ENCODE measurements at regions of chr12 and their contacts with region 1.

Region 1: DNA sequence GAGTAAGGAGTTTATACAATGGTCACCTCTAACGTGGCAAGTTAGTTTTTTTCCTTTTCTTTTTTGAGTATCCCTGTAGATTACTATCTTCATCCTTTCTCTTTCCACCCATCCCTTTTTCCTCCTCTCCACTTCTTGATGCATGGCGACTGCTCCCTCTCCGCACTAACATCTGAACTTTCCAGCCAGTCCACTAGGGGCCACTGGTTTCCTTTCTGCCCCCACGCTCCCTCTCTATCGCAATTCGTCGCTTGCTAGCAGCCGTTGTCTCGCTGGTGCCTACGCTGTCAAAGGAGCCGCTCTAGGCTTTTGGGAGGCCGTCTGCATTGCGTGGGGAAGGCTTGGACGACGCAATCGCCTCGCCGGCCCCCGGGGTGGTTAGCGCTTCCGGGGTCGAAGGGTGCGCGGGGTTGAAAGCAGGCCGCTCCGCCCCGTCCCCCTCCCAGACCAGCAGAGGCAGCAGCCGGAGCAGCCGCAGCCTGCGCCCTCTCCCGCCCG is at the start of gene PCBP2:
- DNase-seq: peak; percentile 97 to 99
- H3K4me3 ChIP-seq: peak within 1 kb of the TSS; percentile 70 to 87
- H3K27ac ChIP-seq: peak within 1 kb of the TSS; percentile 89 to 90
- H3K4me1 ChIP-seq: peaks cover 0 to 23% (median 18%) of the 10 kb centered on the region in 4 donors
- H3K27me3 ChIP-seq: no peaks in the 10 kb centered on the region
- CTCF ChIP-seq: peak; percentile 87 to 93

Region 2: DNA sequence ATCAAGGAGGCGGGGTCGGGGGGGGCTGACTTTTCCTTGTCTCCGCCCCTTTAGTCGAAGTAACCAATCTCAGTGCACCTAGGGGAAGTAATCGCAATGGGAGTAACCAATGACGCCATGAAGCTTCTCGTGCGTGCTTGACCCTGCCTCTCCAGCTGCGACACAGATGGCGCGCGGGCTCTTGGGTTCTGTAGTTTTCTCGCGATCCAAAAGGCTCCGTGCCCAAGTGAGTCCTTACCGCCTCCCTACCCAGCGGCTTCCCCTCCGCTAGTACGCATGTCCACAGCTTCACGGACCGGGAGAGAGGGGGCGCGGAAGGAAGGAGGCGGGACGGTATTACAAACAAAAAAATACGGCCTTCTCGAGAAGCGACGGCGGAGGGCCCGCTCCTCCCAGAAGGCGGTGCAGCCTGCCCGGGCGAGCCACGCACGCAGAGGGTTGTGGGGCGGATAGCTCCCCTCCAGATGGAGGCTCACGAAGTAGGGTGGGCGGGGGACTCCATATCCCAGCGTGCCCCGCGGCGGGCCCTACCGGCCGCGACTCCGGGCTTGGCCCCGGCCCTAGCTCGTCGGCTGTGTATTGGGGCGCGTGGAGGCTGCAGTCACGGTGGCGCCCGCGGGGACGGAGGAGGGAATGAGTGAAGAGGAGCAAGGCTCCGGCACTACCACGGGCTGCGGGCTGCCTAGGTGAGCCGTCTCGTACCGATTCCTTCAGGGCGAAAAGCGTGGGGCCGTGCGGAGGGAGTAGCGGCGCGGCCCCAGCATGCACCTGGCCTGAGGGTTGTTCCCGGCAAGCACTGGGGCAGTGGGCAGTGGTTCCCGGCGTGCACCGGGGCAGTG is 49.3 kb after region 1 on chr12 and contains the start of gene TARBP2:
- intact Hi-C with region 1: loop called (anchors 2 kb)
- DNase-seq: peak; percentile 99 to 100
- H3K4me3 ChIP-seq: peak within 1 kb of the TSS; percentile 70 to 76
- H3K27ac ChIP-seq: peak within 1 kb of the TSS; percentile 96 to 98
- H3K4me1 ChIP-seq: peaks cover 0 to 55% (median 50%) of the 10 kb centered on the region in 4 donors
- H3K27me3 ChIP-seq: no peaks in the 10 kb centered on the region
- CTCF ChIP-seq: no peak

Measured in tibial artery (tissue), 4 donors.